Activated CD8-positive, alpha-beta T cell treated with anti-CD3 and anti-CD28 coated beads for 36 hours (primary cell): ENCODE measurements at regions of chr19 and their contacts with region 1.

Region 1: GRCh38 chr19:44653977-44654774 is 10.5 kb downstream of the PVR start:
- DNase-seq: peak; percentile 88
- ATAC-seq: peak; percentile 95
- H3K4me3 Mint-ChIP-seq: no peak overlapping the region
- H3K27ac Mint-ChIP-seq: no peak overlapping the region
- H3K4me1 Mint-ChIP-seq: peaks cover 12% of the 10 kb centered on the region
- H3K27me3 Mint-ChIP-seq: no peaks in the 10 kb centered on the region
- CTCF ChIP-seq: peak; percentile 75

Region 2: DNA sequence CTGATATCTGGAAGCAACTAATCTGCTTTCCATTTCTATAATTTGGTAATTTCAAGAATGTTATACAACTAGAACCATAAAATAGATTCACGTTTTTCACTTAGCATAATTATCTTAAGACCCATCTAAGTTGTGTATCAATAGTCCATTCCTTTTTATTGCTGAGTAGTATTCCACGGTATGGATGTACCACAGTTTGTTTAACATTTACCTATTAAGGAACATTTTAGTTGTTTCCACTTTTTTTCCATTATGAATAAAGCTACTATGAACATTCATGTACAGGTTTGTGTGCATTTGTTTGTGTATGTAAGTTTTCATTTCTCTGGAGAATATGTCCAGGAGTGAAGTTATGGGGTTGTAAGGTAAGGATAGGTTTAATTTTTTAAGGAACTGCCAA is 279.4 kb before region 1 on chr19:
- CTCF ChIA-PET with region 1: no interaction called
- POLR2A ChIA-PET with region 1: no interaction called
- intact Hi-C with region 1: no loop called
- DNase-seq: no peak
- ATAC-seq: no peak
- H3K4me3 Mint-ChIP-seq: no peak overlapping the region
- H3K27ac Mint-ChIP-seq: no peak overlapping the region
- H3K4me1 Mint-ChIP-seq: no peaks in the 10 kb centered on the region
- H3K27me3 Mint-ChIP-seq: no peaks in the 10 kb centered on the region
- CTCF ChIP-seq: no peak

Region 3: DNA sequence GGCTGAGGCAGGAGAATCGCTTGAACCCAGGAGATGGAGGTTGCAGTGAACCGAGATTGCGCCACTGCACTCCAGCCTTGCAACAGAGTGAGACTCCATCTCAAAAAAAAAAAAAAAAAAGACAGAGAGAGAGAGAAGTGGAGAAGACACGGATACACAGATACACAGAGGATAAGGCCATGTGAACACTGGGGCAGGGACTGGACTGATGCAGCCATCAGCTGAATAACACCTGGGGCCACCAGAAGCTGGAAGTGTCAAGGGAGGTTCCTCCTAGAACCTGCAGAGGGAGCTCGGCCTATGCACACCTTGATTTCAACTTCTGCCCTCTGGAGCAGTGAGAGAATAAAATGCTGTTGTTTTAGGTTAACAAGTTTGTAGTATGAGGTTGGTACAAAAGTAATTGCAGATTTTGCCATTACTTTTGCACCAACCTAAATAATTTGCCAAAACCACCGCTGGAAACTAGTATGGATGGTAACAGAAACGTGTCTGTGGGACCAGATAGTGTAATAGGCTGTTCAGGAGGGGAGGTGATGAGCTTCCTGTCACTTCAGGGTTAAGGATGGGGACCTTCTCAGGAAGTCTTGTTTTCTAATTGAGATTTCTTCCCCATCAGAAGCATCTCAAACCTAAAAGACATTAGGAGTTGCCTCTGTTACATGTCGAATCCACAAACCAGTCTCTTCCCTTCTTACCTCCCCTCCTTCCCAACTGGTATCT is 77.2 kb before region 1 on chr19:
- CTCF ChIA-PET with region 1: interaction called, 58 read pairs
- POLR2A ChIA-PET with region 1: no interaction called
- intact Hi-C with region 1: loop called (anchors 2 kb)
- DNase-seq: peak; percentile 54
- ATAC-seq: peak; percentile 68
- H3K4me3 Mint-ChIP-seq: no peak overlapping the region
- H3K27ac Mint-ChIP-seq: no peak overlapping the region
- H3K4me1 Mint-ChIP-seq: no peaks in the 10 kb centered on the region
- H3K27me3 Mint-ChIP-seq: no peaks in the 10 kb centered on the region
- CTCF ChIP-seq: peak; percentile 47

Region 4: DNA sequence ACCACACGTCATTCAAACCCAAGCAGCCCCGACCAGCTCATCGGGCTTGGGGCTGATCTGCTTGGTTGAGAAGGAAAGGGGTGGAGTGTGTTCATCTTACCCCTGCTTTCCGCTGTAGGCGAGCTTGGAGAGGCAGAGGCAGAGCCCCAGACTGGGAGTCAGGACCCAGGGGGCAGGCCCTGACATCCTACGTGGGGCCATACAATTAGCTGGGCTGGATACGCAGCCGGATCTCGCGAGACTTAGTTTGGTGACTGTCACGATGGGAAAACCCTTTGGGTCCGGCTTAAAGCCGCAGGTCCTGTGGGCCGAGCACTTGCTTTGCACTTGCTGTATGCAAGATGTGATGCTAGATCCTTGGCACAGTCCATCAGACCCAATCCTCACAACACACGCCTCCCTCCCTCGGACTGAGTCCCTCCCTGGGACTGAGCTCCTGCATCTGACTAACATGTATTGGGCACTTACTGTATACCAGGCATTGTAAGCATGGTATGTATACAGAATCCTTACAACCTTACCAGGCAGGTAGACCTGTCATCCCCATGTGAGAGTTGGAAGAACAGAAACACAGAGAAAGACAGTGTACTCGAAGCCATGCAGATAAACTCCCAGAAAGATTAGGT is 48.5 kb after region 1 on chr19:
- CTCF ChIA-PET with region 1: no interaction called
- POLR2A ChIA-PET with region 1: no interaction called
- intact Hi-C with region 1: no loop called
- DNase-seq: no peak
- ATAC-seq: no peak
- H3K4me3 Mint-ChIP-seq: no peak overlapping the region
- H3K27ac Mint-ChIP-seq: no peak overlapping the region
- H3K4me1 Mint-ChIP-seq: no peaks in the 10 kb centered on the region
- H3K27me3 Mint-ChIP-seq: peaks cover 3% of the 10 kb centered on the region
- CTCF ChIP-seq: no peak